ENCODE measurements at regions of chr1 and their contacts with region 1.

Region 1: GRCh38 chr1:10170239-10170574 is 40.2 kb upstream of the KIF1B start:
- DNase-seq: peak; percentile 48
- ATAC-seq: peak; percentile 89
- H3K4me3 Mint-ChIP-seq: peak overlapping the region; percentile 31
- H3K27ac Mint-ChIP-seq: peak overlapping the region; percentile 93
- H3K4me1 Mint-ChIP-seq: peaks cover 46% of the 10 kb centered on the region
- H3K27me3 Mint-ChIP-seq: no peaks in the 10 kb centered on the region

Region 2: GRCh38 chr1:9900142-9901043 is 269.8 kb before region 1 on chr1:
- CTCF ChIA-PET with region 1: no interaction called
- POLR2A ChIA-PET with region 1: no interaction called
- intact Hi-C with region 1: loop called in 1 of 2 experiments (anchors 1 kb)
- DNase-seq: no peak
- ATAC-seq: no peak
- H3K4me3 Mint-ChIP-seq: no peak overlapping the region
- H3K27ac Mint-ChIP-seq: no peak overlapping the region
- H3K4me1 Mint-ChIP-seq: peaks cover 27% of the 10 kb centered on the region
- H3K27me3 Mint-ChIP-seq: no peaks in the 10 kb centered on the region

Region 3: GRCh38 chr1:9910425-9911178 is 259.6 kb before region 1 on chr1:
- CTCF ChIA-PET with region 1: no interaction called
- POLR2A ChIA-PET with region 1: no interaction called
- intact Hi-C with region 1: no loop called
- DNase-seq: peak; percentile 100
- ATAC-seq: peak; percentile 96
- H3K4me3 Mint-ChIP-seq: peak overlapping the region; percentile 82
- H3K27ac Mint-ChIP-seq: peak overlapping the region; percentile 92
- H3K4me1 Mint-ChIP-seq: peaks cover 23% of the 10 kb centered on the region
- H3K27me3 Mint-ChIP-seq: no peaks in the 10 kb centered on the region

Region 4: GRCh38 chr1:10074059-10074851 is 96.0 kb before region 1 on chr1:
- CTCF ChIA-PET with region 1: interaction called, 4 read pairs
- POLR2A ChIA-PET with region 1: no interaction called
- intact Hi-C with region 1: loop called in 1 of 2 experiments (anchors 1 kb)
- DNase-seq: peak; percentile 84
- ATAC-seq: peak; percentile 98
- H3K4me3 Mint-ChIP-seq: no peak overlapping the region
- H3K27ac Mint-ChIP-seq: no peak overlapping the region
- H3K4me1 Mint-ChIP-seq: peaks cover 12% of the 10 kb centered on the region
- H3K27me3 Mint-ChIP-seq: no peaks in the 10 kb centered on the region

Region 5: DNA sequence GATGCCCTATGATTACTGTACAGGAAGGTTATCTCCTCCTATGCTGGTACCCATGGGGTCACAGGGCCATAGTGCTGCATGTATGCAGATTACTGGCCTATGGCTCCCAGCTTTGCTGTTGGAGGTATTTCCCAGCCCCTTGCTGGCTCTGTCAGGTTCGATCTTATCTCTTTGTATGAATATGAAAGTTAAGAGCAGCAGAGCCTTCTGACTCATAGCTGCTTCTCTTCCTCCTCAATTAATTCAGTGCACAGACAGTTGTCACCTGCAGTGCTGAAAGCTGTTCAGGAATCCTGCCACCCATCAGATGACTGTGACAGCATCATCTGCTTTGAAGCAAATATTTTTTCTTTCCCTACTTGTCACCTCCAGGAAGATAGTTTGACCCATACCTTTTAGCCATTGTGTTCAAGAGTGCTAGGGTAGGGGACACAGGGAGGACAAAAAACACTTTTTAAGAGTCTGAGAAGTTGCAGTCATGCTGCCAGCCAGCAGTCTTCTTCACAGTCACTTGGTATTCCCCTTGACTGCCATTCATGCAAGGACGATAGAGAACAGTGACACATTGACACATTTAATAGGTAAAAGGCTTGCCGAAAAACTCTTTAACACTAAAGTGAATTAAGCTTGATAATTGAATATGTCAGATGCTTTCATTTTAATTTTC is 113.2 kb after region 1 on chr1:
- CTCF ChIA-PET with region 1: no interaction called
- POLR2A ChIA-PET with region 1: interaction called, 3 read pairs
- intact Hi-C with region 1: loop called in 1 of 2 experiments (anchors 1 kb)
- DNase-seq: peak; percentile 62
- ATAC-seq: peak; percentile 94
- H3K4me3 Mint-ChIP-seq: no peak overlapping the region
- H3K27ac Mint-ChIP-seq: peak overlapping the region; percentile 26
- H3K4me1 Mint-ChIP-seq: peaks cover 30% of the 10 kb centered on the region
- H3K27me3 Mint-ChIP-seq: no peaks in the 10 kb centered on the region

Measured in activated CD4-positive, alpha-beta T cell treated with anti-CD3 and anti-CD28 coated beads for 36 hours (primary cell).